ENCODE measurements at regions of chr1 and their contacts with region 1.

Region 1: GRCh38 chr1:198919667-198920398 is 281.0 kb downstream of the PTPRC start:
- DNase-seq: no peak
- H3K4me3 ChIP-seq: no peak overlapping the region
- H3K27ac ChIP-seq: peak overlapping the region in 1 of 4 donors; percentile 7
- H3K4me1 ChIP-seq: peaks cover 0 to 18% (median 0%) of the 10 kb centered on the region in 4 donors
- H3K27me3 ChIP-seq: no peaks in the 10 kb centered on the region
- CTCF ChIP-seq: no peak
- EP300 ChIP-seq: no peak
- POLR2A ChIP-seq: no peak

Region 2: DNA sequence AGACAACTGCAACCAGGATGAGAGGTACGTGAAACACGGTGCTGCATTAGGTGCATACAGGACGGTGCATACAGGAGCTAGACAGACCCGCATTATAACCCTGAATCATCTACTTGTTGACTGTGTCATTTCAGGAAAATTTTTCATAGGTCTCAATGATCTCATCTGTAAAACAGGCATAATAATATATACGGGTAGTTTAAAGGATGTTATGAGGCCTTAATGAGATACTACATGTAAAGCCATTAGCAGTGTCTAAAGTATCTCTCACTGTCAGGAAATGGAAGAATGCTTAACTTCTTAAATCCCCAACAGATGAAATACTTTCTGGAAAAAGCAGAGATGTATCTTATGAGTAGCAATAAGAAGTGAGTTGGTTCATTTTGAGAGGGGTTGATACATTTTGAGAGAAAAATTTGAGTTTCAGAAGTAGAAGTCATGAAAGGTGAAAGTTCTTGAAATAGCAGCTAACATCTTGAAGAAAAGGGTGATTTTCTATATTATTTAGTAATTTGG is 388.6 kb after region 1 on chr1:
- in situ Hi-C with region 1: no loop called
- intact Hi-C with region 1: loop called (anchors 5 kb)
- DNase-seq: no peak
- H3K4me3 ChIP-seq: no peak overlapping the region
- H3K27ac ChIP-seq: no peak overlapping the region
- H3K4me1 ChIP-seq: no peaks in the 10 kb centered on the region
- H3K27me3 ChIP-seq: no peaks in the 10 kb centered on the region
- CTCF ChIP-seq: no peak
- EP300 ChIP-seq: no peak
- POLR2A ChIP-seq: no peak

Measured in transverse colon (tissue), 4 donors.